Activated CD4-positive, alpha-beta T cell treated with anti-CD3 and anti-CD28 coated beads, Interleukin-2, amount 10 ng/mL, durations not matched to agents 24 days and 14 days (primary cell): ENCODE measurements at regions of chr16 and their contacts with region 1.

Region 1: DNA sequence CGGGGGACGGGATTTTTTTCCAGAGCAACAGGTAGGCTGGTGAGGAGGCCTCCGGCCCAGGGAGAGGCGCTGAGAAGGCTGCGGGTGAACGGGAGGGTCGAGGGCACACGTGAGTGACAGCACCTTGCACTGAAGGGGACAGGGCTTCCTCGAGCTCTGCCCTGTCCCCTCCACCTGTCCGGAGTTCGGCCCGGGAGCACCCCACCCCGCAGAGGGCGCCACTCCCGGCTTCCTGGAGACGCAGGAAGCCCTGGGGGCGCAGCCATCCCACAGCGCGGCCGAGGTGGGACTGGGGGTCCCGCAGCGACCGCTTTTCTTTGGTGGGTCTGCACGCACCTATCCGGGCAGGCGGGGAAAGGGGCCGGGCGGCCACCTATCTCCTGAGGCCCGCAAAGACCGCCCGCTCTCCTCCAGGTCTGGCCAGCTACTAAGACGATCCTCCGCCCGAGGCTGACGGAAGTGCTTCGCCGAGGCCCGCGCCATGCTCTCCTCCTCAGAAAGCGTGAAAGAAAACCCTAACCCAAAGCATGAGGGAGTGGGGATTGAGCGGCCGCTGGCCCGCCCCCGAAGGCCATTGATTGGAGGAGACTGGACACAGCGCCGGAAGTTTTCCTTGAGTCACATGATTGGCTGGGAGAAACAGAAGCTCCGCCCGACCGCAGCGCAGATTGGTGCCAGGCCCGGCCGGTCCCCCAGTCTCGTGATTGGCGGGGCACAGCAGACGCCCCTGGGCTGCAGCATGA is 34.3 kb downstream of the DDX19A start:
- DNase-seq: peak; percentile 99
- H3K4me3 Mint-ChIP-seq: peak overlapping the region; percentile 88
- H3K27ac Mint-ChIP-seq: peak overlapping the region; percentile 96
- H3K4me1 Mint-ChIP-seq: peaks cover 5% of the 10 kb centered on the region
- H3K27me3 Mint-ChIP-seq: no peaks in the 10 kb centered on the region

Region 2: DNA sequence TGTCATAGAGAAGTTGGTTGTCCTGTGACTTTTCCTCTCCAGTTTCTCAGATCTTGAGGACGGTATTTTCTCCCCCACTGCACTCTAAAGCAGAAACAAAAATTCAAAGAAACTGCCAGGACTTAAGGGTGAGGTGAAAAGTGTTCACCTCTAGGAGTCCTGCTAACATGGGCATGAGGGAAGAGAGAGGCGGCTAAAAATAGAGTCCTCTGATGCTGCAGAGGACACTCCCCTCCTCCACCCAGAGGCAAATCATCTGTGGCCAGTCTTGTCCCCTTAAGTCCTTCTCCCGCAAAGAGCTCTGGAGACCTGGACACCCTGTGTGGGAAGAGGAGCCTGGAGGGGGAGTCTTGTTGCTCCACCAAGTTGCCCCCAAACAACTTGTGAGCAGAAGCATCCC is 39.0 kb before region 1 on chr16:
- intact Hi-C with region 1: loop called (anchors 1 kb)
- DNase-seq: no peak
- H3K4me3 Mint-ChIP-seq: no peak overlapping the region
- H3K27ac Mint-ChIP-seq: peak overlapping the region; percentile 53
- H3K4me1 Mint-ChIP-seq: peaks cover 7% of the 10 kb centered on the region
- H3K27me3 Mint-ChIP-seq: no peaks in the 10 kb centered on the region

Region 3: DNA sequence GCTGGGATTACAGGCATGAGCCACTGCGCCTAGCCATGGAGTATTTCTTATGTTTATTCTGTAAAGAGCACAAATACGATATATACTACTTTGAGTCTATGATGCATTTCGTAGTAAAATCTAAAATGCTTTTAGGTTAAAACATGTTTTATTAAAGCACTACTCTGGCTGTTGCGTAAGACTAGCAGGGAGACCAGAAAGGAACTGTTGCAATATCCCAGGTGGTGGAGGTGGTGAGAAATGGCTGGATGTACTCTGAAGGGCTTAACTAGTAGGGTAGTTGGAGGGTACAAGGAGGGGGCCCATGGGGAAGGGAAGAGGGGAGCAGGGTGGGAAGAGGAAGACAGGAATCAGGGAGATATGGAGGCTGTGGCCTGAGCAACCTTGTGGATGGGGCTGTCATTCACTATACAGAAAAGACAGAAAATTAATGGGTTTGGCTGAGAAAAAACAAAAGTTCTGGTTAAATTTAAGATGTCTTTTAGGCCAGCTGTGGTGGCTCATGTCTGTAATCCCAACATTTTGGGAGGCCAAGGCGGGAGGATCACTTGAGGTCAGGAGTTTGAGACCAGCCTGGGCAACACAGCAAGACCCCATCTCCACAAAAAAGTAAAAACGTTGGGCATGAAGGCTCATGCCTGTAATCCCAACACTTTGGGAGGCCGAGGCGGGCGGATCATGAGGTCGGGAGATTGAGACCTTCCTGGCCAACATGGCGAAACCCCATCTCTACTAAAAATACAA is 22.1 kb after region 1 on chr16:
- intact Hi-C with region 1: no loop called
- DNase-seq: no peak
- H3K4me3 Mint-ChIP-seq: no peak overlapping the region
- H3K27ac Mint-ChIP-seq: peak overlapping the region; percentile 89
- H3K4me1 Mint-ChIP-seq: peaks cover 41% of the 10 kb centered on the region
- H3K27me3 Mint-ChIP-seq: no peaks in the 10 kb centered on the region

Region 4: GRCh38 chr16:70438969-70439862 is 58.2 kb after region 1 on chr16 and contains the start of gene ST3GAL2:
- intact Hi-C with region 1: loop called (anchors 1 kb)
- DNase-seq: peak; percentile 98
- H3K4me3 Mint-ChIP-seq: peak within 1 kb of the TSS; percentile 100
- H3K27ac Mint-ChIP-seq: peak within 1 kb of the TSS; percentile 96
- H3K4me1 Mint-ChIP-seq: peaks cover 26% of the 10 kb centered on the region
- H3K27me3 Mint-ChIP-seq: no peaks in the 10 kb centered on the region
- total RNA-seq, gene ST3GAL2: 27.9 and 37.0 TPM in 2 replicates

Region 5: DNA sequence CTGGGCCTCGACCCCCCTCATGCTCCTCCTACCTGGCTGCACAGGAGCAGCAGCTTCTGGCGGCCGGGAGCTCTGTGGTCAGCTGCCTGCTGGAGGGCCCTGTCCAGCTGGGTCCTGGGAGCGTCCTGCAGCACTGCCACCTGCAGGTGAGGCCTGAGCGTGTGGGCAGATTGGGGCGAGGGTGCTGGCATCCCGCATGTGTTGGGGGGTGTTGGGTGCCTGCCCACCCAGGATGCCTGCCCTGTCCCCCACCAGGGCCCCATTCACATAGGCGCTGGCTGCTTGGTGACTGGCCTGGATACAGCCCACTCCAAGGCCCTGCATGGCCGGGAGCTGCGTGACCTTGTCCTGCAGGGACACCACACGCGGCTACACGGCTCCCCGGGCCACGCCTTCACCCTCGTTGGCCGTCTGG is 89.9 kb after region 1 on chr16:
- intact Hi-C with region 1: loop called (anchors 1 kb)
- DNase-seq: no peak
- H3K4me3 Mint-ChIP-seq: no peak overlapping the region
- H3K27ac Mint-ChIP-seq: no peak overlapping the region
- H3K4me1 Mint-ChIP-seq: peaks cover 2% of the 10 kb centered on the region
- H3K27me3 Mint-ChIP-seq: no peaks in the 10 kb centered on the region

Region 6: DNA sequence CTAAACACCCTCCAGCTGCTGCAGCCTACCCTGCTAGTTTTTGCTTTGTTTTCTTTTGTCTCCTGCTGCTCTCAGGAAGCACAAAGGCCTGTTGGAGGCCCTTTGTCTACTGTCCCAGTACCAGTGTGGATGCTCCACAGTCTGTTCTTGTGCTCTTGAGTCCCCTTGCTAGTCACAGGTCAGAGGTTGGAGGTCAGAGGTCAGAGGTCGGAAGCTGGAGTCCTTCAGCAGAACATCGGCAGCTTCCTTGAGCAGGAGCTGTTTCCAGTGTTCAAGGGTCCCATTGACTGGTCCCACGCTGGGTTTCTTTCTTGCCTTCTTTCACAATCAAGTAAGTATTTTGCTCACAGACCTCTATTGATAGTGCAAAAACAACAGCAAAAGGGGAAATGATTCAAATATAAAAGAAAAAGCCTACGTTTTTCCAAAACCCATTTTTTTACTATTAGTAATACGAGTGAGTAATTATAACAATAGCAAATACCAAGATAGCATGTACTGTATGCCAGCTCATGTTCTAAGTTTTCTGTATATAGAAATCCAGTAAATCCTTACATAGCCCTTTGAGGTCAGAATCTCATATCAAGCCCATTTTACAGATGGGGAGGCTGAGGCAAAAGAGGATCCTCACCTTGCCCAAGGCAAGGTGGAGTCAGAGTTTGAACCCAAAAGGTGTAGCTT is 254.4 kb after region 1 on chr16:
- intact Hi-C with region 1: no loop called
- DNase-seq: no peak
- H3K4me3 Mint-ChIP-seq: no peak overlapping the region
- H3K27ac Mint-ChIP-seq: no peak overlapping the region
- H3K4me1 Mint-ChIP-seq: no peaks in the 10 kb centered on the region
- H3K27me3 Mint-ChIP-seq: peaks cover 5% of the 10 kb centered on the region

Region 7: DNA sequence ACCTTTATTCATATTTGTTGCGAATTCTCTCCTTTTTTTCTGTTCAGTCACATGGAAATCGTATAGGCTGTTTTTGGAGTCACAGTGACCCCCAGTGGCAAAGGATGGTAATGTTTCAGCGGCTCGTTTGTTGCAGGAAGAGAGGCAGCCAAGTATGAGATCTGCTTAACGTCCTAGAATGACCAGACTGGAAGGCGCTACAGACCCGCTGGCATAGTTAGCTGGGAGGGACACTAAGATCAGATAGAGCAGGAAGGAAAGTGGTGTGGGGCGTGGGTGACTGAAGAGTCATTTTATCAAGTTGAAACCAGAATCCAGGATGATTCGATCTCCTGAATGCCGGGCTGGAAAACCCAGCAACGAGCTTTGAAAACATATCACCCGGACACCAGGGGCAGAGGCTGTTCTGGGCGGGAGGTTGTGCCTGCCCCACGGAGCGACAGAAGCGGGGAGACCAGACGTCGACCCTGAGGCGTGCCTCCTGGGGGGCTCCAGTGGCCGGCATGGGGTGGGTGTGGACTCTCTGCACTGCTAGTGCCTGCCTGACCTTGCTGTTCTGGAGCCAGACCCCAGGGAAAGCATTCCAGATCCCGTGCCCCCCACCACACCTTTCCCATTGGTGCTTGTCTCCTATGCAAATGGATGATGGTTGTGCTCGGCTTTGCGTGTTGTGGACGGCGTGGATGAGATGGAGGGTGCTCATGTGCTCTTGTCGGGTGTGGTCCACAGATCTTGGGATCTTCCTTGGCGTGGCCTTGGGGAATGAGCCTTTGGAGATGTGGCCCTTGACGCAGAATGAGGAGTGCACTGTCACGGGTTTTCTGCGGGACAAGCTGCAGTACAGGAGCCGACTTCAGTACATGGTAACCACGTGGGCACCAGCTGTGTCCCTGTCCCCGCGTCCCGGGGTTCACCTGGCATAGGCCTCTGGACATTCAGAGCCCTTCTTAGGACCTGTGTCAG is 273.1 kb after region 1 on chr16:
- intact Hi-C with region 1: loop called (anchors 5 kb)
- DNase-seq: peak; percentile 95
- H3K4me3 Mint-ChIP-seq: peak overlapping the region; percentile 59
- H3K27ac Mint-ChIP-seq: no peak overlapping the region
- H3K4me1 Mint-ChIP-seq: peaks cover 6% of the 10 kb centered on the region
- H3K27me3 Mint-ChIP-seq: no peaks in the 10 kb centered on the region